A673 (cell line): ENCODE measurements at regions of chr3 and their contacts with region 1.

Region 1: DNA sequence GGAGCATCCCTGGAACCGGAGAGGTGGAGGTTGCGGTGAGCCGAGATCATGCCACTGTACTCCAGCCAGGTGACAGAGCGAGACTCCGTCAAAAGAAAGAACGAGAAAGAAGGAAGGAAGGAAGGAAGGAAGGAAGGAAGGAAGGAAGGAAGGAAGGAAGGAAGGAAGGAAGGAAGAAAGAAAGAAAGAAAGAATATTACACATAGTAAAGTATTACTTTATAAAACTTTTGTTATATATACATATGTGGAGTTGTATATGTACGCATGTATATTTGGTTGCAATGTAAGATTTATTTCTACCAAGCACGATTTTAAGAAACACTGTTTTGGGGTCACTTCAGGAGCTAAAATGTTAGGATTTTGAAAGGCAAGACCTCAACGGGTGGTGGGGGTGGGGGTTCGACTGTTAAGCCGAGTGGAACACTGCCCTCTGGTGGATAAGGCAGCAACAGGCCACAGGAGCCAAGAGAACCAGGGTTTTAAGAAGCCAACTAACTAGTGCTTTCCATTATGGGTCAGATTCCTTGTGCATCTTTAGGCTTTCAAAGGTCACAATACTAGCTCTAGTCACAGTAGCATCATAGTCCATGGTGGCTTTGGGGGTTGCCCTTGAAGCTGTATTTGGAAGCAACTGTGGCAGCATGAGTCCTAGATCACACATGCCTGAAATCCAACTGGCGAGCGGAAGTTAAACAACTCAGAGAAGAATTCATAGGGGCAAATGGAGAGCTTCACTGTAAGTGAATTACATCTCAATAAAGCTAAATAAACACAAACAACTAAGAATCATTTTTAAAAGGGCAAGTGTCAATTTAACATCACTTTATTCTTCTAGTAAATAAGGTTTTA is 22.5 kb downstream of the GLB1 start:
- DNase-seq: peak; percentile 85
- H3K4me3 ChIP-seq: no peak overlapping the region
- H3K27ac ChIP-seq: peak overlapping the region; percentile 48
- H3K4me1 ChIP-seq: no peaks in the 10 kb centered on the region
- H3K27me3 ChIP-seq: no peaks in the 10 kb centered on the region
- CTCF ChIP-seq: peak; percentile 94

Region 2: GRCh38 chr3:32733631-32734229 is 340.7 kb before region 1 on chr3:
- CTCF ChIA-PET with region 1: interaction called, 14 read pairs
- POLR2A ChIA-PET with region 1: no interaction called
- intact Hi-C with region 1: loop called (anchors 5 kb)
- DNase-seq: peak; percentile 57
- H3K4me3 ChIP-seq: no peak overlapping the region
- H3K27ac ChIP-seq: no peak overlapping the region
- H3K4me1 ChIP-seq: no peaks in the 10 kb centered on the region
- H3K27me3 ChIP-seq: no peaks in the 10 kb centered on the region
- CTCF ChIP-seq: peak; percentile 66

Region 3: GRCh38 chr3:32947789-32948238 is 126.6 kb before region 1 on chr3:
- CTCF ChIA-PET with region 1: interaction called, 5 read pairs
- POLR2A ChIA-PET with region 1: no interaction called
- intact Hi-C with region 1: loop called (anchors 2 kb)
- DNase-seq: peak; percentile 91
- H3K4me3 ChIP-seq: no peak overlapping the region
- H3K27ac ChIP-seq: no peak overlapping the region
- H3K4me1 ChIP-seq: no peaks in the 10 kb centered on the region
- H3K27me3 ChIP-seq: no peaks in the 10 kb centered on the region
- CTCF ChIP-seq: peak; percentile 89

Region 4: GRCh38 chr3:33060609-33061337 is 13.7 kb before region 1 on chr3:
- CTCF ChIA-PET with region 1: interaction called, 15 read pairs
- POLR2A ChIA-PET with region 1: no interaction called
- intact Hi-C with region 1: no loop called
- DNase-seq: no peak
- H3K4me3 ChIP-seq: no peak overlapping the region
- H3K27ac ChIP-seq: no peak overlapping the region
- H3K4me1 ChIP-seq: no peaks in the 10 kb centered on the region
- H3K27me3 ChIP-seq: no peaks in the 10 kb centered on the region
- CTCF ChIP-seq: no peak

Region 5: DNA sequence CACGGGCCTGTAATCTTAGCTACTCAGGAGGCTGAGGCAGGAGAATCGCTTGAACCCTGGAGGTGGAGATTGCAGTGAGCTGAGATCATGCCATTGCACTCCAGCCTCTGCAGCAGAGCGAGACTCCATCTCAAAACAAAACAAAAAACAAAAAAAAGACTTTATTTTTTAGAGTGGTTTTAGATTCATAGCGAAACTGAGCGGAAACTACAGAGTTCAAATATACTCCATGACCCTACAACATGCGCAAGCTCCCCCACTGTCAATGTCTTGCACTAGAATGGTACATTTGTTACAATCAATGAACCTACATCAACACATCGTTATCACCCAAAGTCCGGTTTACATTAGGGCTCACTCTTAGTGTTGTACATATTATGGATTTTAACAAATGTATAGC is 37.1 kb after region 1 on chr3:
- CTCF ChIA-PET with region 1: interaction called, 10 read pairs
- POLR2A ChIA-PET with region 1: no interaction called
- intact Hi-C with region 1: no loop called
- DNase-seq: no peak
- H3K4me3 ChIP-seq: no peak overlapping the region
- H3K27ac ChIP-seq: no peak overlapping the region
- H3K4me1 ChIP-seq: peaks cover 3% of the 10 kb centered on the region
- H3K27me3 ChIP-seq: no peaks in the 10 kb centered on the region
- CTCF ChIP-seq: no peak

Region 6: GRCh38 chr3:33372218-33373081 is 298.0 kb after region 1 on chr3:
- CTCF ChIA-PET with region 1: interaction called, 15 read pairs
- POLR2A ChIA-PET with region 1: no interaction called
- intact Hi-C with region 1: no loop called
- DNase-seq: peak; percentile 76
- H3K4me3 ChIP-seq: no peak overlapping the region
- H3K27ac ChIP-seq: no peak overlapping the region
- H3K4me1 ChIP-seq: no peaks in the 10 kb centered on the region
- H3K27me3 ChIP-seq: no peaks in the 10 kb centered on the region
- CTCF ChIP-seq: peak; percentile 96